Activated T-helper 1 cell treated with anti-CD3 and anti-CD28 coated beads, Interleukin-12 subunit alpha, Interleukin-12 subunit beta, Interleukin-2, Interleukin-4 antibody, amounts not matched to agents 30 ng/mL and 10 ng/mL and 1 ng/mL, durations not matched to agents 14 hours and 24 hours and 36 hours (primary cell): ENCODE measurements at regions of chr1 and their contacts with region 1.

Region 1: GRCh38 chr1:93909146-93910050 is at the start of gene GCLM:
- DNase-seq: peak; percentile 89
- H3K4me3 Mint-ChIP-seq: peak within 1 kb of the TSS; percentile 94
- H3K27ac Mint-ChIP-seq: peak within 1 kb of the TSS; percentile 94
- H3K4me1 Mint-ChIP-seq: peaks cover 40% of the 10 kb centered on the region
- H3K27me3 Mint-ChIP-seq: peaks cover 20% of the 10 kb centered on the region
- total RNA-seq, gene GCLM: 20.2 and 23.8 TPM in 2 replicates

Region 2: DNA sequence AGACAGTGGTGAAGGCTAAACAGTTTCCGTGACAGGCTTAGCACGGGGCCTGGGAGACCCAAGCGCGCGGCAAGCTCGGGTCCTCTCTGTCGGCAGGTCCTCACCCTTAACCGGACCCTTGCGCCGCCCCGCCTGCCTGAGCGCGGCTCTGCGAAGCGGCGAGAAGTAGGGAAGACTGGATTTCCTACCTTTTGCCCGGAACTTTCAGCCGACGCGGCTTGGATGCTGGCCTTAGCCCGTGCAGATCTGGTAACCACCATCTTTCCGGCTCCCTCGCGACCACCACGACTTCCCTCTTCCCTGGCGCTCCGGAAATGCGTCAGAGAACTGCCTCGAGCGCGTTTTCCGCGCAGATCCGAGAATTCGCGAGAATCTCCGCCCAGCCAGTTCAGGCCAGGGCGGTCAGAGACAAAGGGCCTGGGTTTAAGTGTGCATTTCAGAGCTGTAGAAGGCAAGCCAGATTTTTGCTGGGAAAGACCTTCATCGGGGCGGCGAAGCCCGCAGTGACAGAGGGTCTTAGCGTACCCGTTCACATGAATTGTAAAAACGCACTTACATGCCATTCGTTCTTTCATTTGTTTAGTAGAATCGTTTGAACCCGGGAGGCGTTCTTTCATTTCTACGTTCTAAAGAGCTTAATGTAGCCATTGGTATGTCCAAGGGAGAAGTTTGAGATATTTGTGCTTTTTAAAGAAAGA is 30.4 kb before region 1 on chr1 and contains the start of gene DNTTIP2:
- intact Hi-C with region 1: loop called (anchors 1 kb)
- DNase-seq: peak; percentile 86
- H3K4me3 Mint-ChIP-seq: peak within 1 kb of the TSS; percentile 95
- H3K27ac Mint-ChIP-seq: peak within 1 kb of the TSS; percentile 98
- H3K4me1 Mint-ChIP-seq: peaks cover 55% of the 10 kb centered on the region
- H3K27me3 Mint-ChIP-seq: no peaks in the 10 kb centered on the region
- total RNA-seq, gene DNTTIP2: 80.3 and 90.8 TPM in 2 replicates

Region 3: DNA sequence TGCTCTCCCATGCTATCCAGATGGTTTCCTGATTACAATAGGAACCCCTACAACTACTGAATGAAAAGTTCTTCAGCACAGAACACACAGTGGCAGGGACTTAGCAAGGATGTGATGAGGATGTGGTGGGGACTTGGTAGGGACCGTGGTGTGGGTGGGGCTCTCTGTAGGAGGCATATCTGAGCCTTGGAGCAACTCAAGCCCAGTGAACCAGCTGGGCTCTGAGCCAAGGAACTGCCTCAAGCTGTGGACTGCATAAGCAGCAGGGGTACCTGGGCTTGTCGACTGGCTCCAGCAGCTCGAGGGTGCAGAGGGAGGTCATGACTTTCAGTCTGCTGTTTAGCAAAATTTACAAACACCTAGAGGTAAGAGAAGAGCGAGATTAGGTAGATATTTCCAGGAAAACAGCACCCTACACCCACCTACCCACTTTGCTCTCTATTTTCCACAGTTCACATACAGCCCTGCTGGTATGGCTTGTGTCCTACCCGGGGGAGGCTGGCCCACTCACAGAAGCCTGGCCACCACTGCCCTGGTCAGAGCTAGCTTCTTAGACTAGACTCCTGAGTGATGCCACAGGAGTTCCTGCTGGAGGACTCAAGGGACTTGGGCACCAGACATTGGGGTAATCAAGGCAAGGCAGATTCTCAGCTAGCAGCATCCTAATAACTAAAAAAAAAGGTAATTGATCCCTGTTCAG is 86.6 kb after region 1 on chr1:
- intact Hi-C with region 1: no loop called
- DNase-seq: no peak
- H3K4me3 Mint-ChIP-seq: no peak overlapping the region
- H3K27ac Mint-ChIP-seq: no peak overlapping the region
- H3K4me1 Mint-ChIP-seq: peaks cover 16% of the 10 kb centered on the region
- H3K27me3 Mint-ChIP-seq: peaks cover 10% of the 10 kb centered on the region

Region 4: GRCh38 chr1:94039514-94039870 is 130.1 kb after region 1 on chr1:
- intact Hi-C with region 1: loop called (anchors 5 kb)
- DNase-seq: peak; percentile 24
- H3K4me3 Mint-ChIP-seq: no peak overlapping the region
- H3K27ac Mint-ChIP-seq: no peak overlapping the region
- H3K4me1 Mint-ChIP-seq: peaks cover 24% of the 10 kb centered on the region
- H3K27me3 Mint-ChIP-seq: peaks cover 12% of the 10 kb centered on the region

Region 5: DNA sequence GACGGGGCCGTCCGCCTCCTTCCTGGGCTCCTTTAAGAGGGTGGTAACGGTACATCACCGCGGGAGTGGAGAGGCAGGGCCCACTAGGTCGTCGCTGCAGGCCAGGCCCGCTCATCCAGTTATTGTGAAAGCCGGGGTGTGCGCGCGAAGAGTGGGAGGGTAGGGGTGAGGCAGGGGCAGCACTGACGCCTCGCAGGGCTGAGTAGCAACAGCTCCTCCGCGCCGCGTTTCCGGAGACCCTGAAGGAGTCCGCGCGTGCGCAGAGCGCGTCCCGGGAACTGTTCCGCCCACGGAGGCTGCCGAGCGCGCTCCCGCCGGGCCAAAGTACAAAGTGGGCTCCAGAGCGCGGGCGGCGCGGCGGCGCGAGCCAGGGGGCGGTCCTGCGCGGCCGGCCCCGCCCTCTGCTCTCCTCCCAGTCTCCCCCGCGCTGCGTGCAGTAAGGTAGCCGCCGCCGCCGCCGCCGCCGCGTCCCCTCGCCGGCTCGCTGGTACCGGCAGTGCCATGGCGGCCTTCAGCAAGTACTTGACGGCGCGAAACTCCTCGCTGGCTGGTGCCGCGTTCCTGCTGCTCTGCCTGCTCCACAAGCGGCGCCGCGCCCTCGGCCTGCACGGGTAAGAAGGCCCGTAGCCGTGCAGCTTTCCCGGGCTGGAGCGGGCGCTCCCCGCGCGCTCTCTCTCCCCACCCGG is 508.7 kb after region 1 on chr1 and contains the start of gene ABCD3:
- intact Hi-C with region 1: loop called (anchors 1 kb)
- DNase-seq: peak; percentile 96
- H3K4me3 Mint-ChIP-seq: peak within 1 kb of the TSS; percentile 89
- H3K27ac Mint-ChIP-seq: peak within 1 kb of the TSS; percentile 68
- H3K4me1 Mint-ChIP-seq: peaks cover 31% of the 10 kb centered on the region
- H3K27me3 Mint-ChIP-seq: peaks cover 15% of the 10 kb centered on the region
- total RNA-seq, gene ABCD3: 25.7 and 28.2 TPM in 2 replicates

Region 6: GRCh38 chr1:95233737-95234500 is 1324.5 kb after region 1 on chr1 and contains the start of gene RWDD3:
- intact Hi-C with region 1: loop called (anchors 10 kb)
- DNase-seq: peak; percentile 92
- H3K4me3 Mint-ChIP-seq: peak within 1 kb of the TSS; percentile 94
- H3K27ac Mint-ChIP-seq: peak within 1 kb of the TSS; percentile 93
- H3K4me1 Mint-ChIP-seq: peaks cover 29% of the 10 kb centered on the region
- H3K27me3 Mint-ChIP-seq: peaks cover 19% of the 10 kb centered on the region
- total RNA-seq, gene RWDD3: 10.6 and 10.8 TPM in 2 replicates